Calu3 (cell line): ENCODE measurements at regions of chr4 and their contacts with region 1.

Region 1: GRCh38 chr4:24912252-24913118 is at the start of gene CCDC149:
- DNase-seq: peak; percentile 81
- H3K4me3 Mint-ChIP-seq: peak within 1 kb of the TSS; percentile 74
- H3K27ac Mint-ChIP-seq: peak within 1 kb of the TSS; percentile 95
- H3K4me1 Mint-ChIP-seq: peaks cover 11% of the 10 kb centered on the region
- H3K27me3 Mint-ChIP-seq: no peaks in the 10 kb centered on the region
- CTCF ChIP-seq: no peak
- total RNA-seq, gene CCDC149: 8.9 and 9.5 TPM in 2 replicates

Region 2: GRCh38 chr4:24488399-24489164 is 423.9 kb before region 1 on chr4:
- CTCF ChIA-PET with region 1: no interaction called
- intact Hi-C with region 1: loop called (anchors 10 kb)
- DNase-seq: peak; percentile 81
- H3K4me3 Mint-ChIP-seq: no peak overlapping the region
- H3K27ac Mint-ChIP-seq: no peak overlapping the region
- H3K4me1 Mint-ChIP-seq: no peaks in the 10 kb centered on the region
- H3K27me3 Mint-ChIP-seq: peaks cover 17% of the 10 kb centered on the region
- CTCF ChIP-seq: peak; percentile 65

Region 3: GRCh38 chr4:24856586-24856985 is 55.9 kb before region 1 on chr4:
- CTCF ChIA-PET with region 1: interaction called, 3 read pairs
- intact Hi-C with region 1: loop called (anchors 10 kb)
- DNase-seq: peak; percentile 25
- H3K4me3 Mint-ChIP-seq: no peak overlapping the region
- H3K27ac Mint-ChIP-seq: peak overlapping the region; percentile 56
- H3K4me1 Mint-ChIP-seq: peaks cover 58% of the 10 kb centered on the region
- H3K27me3 Mint-ChIP-seq: no peaks in the 10 kb centered on the region
- CTCF ChIP-seq: no peak